Psoas muscle (tissue), 8 donors: ENCODE measurements at regions of chr1 and their contacts with region 1.

Region 1: DNA sequence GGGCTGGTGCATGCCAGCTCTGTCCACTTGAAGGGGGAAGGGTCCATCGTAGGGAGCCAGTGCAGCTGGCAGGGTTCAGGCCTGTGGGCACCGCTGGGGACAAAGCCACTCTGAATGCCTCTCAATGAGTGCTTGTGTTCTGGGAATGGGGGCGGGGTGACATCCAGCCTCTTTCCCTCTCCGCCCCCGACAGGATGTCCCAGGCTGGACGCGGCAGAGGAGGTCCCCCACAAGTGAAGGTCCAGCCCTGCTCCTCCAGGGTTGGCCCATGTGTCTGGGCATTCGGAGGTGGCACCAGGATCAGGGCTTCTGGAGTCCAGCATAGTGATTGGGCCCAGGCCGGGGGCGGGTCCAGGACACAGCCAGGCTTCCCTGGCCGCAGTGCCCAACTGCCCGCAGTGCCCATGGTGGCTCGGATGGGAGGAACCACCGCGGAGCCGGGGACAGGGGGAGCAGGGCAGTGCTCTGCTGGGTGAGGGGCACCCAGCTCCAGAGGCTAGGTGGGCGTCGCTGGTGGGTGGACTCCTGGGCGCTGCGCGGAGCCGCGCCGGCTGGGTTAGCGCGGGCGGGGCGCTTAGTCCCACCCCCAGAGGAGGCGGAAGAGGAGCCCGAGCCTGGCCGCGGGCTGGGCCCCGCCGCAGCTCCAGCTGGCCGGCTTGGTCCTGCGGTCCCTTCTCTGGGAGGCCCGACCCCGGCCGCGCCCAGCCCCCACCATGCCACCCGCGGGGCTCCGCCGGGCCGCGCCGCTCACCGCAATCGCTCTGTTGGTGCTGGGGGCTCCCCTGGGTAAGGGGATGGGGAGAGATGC is at the start of gene SHISA4:
- DNase-seq: peak; percentile 84 to 92
- ATAC-seq: peak; percentile 68 to 76 (median 74)
- H3K4me3 ChIP-seq: peak within 1 kb of the TSS; percentile 79
- H3K27ac ChIP-seq: peak within 1 kb of the TSS; percentile 95
- H3K4me1 ChIP-seq: peaks cover 82% of the 10 kb centered on the region
- H3K27me3 ChIP-seq: no peaks in the 10 kb centered on the region
- CTCF ChIP-seq: no peak
- total RNA-seq, gene SHISA4: 105 to 157 (median 137) TPM

Region 2: DNA sequence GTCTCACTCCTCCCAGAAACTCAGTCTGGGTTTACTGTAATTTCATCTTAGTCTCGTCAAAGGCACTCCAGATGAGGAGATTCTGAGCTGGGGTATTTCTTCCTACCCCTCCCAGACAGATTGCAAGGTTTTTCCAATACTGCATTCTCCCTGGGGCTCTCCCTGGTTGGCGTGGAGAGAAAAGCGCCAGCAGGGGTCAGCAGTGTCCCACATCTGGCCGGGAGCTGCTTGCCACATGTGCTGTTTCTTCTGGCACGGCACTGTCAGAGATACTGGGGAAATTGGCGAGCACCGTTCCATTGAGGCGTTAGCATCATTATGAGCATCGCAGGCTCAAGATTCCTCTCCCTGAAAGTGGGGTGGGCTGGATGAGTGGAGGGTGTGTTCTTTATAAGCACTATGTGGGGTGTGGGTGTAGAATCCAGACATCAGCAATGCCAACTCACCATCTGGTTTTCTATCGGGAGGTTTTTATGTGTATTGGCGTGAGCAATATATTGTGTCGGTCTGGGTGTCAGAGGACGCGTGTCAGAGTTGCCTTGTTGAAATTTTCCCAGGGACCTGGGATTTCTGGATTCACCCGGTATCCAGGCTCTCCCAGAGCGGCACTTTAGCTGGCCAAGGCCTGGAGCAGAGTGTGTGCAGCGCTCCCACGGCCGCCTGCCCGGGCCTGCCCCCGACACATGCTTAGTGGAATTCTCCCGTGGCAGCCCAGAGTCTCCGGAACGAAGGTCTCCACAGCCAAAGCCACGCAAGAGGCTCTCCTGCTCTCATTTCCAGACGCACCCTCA is 357.6 kb before region 1 on chr1:
- intact Hi-C with region 1: no loop called
- DNase-seq: peak; percentile 88 to 91
- ATAC-seq: peak; percentile 72 to 91 (median 78)
- H3K4me3 ChIP-seq: no peak overlapping the region
- H3K27ac ChIP-seq: peak overlapping the region; percentile 46
- H3K4me1 ChIP-seq: peaks cover 9% of the 10 kb centered on the region
- H3K27me3 ChIP-seq: peaks cover 0 to 9% (median under 1%) of the 10 kb centered on the region in 3 donors
- CTCF ChIP-seq: peak; percentile 63

Region 3: DNA sequence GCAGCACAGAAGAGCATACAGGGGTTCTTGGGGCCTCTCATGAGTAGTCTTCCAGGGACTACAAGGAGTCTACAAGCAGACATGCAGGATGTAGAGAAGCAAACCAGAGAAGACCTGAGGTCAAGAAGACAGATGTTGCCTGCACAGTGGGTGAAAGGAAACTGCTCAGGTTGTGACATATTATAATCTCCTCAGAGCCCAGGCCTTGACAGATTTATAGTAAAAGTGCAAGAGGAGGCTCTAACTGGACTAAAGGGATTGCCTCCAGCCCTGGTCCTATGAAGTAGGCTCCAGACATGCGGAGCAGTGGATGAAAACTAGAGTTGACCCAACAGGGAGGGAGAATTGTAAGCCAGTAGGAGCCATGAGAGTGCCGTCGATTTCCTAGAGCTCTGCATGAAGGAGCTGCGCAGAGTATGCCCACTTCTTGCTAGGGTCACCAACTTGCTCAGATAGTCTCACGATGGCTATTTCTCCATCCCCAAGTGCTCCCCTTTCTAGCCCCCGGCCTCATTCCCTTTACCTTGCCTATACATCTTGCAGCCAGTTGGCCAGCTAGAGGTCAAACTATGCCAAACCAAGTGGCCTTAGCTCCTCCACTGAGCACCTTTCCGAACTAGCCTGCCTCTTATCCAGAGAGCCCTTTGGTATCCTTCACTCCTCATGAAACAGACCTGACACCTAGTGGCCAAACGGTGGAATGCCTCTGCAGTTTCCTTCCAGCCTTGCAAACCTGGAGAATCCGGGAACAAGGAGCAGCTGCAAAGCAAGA is 95.8 kb before region 1 on chr1:
- intact Hi-C with region 1: no loop called
- DNase-seq: peak; percentile 57 to 78
- ATAC-seq: peak; percentile 89 to 94 (median 90)
- H3K4me3 ChIP-seq: no peak overlapping the region
- H3K27ac ChIP-seq: peak overlapping the region; percentile 48
- H3K4me1 ChIP-seq: peaks cover 19% of the 10 kb centered on the region
- H3K27me3 ChIP-seq: peaks cover 0 to 12% (median 0%) of the 10 kb centered on the region in 3 donors
- CTCF ChIP-seq: peak; percentile 92

Region 4: DNA sequence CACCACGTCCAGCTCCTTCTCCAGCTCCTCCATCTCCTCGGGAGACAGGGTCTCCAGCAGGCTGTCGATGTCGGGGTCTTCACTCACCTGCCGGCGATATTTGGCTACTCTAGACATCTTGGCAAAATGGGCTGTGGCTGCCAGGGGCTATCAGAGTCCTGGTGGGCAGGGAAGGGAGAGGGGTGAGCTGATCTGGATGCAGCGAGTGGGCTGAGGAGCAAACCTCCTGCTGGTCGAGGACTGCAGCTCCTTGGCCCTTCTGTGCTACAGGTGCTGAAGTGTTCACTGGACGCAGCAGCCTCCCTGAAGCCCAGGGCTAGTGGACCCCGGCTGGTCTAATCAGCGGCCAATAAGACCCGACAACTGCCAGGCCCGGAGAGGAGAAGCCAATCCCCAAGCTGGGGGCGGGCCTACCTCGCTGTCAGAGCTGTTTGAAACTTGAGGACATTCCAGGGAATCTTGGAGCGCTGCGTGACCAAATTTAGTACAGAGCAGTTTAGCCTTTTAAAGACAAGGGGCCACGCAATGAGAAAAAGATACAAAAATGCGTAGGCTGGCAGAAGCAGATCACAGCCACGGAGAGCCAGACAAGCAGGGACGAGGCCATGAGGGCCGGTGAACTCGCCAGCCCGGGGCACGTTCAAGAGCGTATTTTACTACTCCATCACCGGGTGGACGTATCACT is 57.9 kb after region 1 on chr1 and contains the start of gene LMOD1:
- intact Hi-C with region 1: loop called in 1 of 2 experiments (anchors 2 kb)
- DNase-seq: peak; percentile 85 to 92
- ATAC-seq: peak; percentile 82 to 87 (median 84)
- H3K4me3 ChIP-seq: peak within 1 kb of the TSS; percentile 84
- H3K27ac ChIP-seq: peak within 1 kb of the TSS; percentile 86
- H3K4me1 ChIP-seq: peaks cover 11% of the 10 kb centered on the region
- H3K27me3 ChIP-seq: no peaks in the 10 kb centered on the region
- CTCF ChIP-seq: no peak
- total RNA-seq, gene LMOD1: 12.8 to 45.4 (median 24.6) TPM